ENCODE measurements at regions of chr10 and their contacts with region 1.

Region 1: DNA sequence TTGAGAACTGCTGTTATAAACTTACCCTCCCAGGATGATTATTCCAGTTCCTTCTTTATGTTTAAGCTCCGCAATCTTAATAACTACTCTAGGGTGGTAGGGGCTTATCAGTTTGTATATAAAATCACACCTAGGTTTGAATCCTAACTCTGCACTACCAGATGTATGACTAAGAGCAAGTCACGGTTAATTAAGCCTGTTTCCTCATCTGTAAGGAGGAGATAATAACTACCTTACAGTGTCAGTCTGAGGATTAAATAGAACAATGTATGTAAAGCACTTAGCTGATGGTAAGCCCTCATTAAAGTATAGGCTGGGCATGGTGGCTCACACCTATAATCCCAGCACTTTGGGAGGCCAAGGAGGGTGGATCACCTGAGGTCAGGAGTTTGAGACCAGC is 9.2 kb downstream of the DNA2 start:
- H3K4me3 ChIP-seq: no peak overlapping the region
- H3K27ac ChIP-seq: no peak overlapping the region
- H3K4me1 ChIP-seq: no peaks in the 10 kb centered on the region
- CTCF ChIP-seq: no peak

Region 2: DNA sequence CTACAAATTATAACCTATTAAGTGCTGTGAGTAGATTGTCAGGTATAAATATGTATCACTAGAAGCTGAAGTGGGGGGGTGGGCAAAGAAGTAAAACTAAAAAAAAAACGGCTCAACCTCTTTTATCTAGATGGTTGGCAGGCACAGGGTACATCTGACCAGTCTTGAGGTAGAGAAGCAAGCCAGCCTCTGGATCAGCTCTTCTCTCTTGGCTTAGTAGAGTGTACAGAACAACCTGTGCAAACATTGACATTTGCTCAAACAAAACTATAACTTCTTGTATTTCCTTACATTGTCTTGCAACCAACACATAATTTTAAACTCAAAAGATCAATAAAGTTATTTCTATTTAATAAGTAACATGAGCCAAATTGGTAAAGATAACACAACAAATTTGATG is 16.4 kb before region 1 on chr10:
- CTCF ChIA-PET with region 1: interaction called, 4 read pairs
- POLR2A ChIA-PET with region 1: interaction called, 10 read pairs
- H3K4me3 ChIP-seq: no peak overlapping the region
- H3K27ac ChIP-seq: no peak overlapping the region
- H3K4me1 ChIP-seq: no peaks in the 10 kb centered on the region
- CTCF ChIP-seq: no peak

Region 3: GRCh38 chr10:68506411-68506810 is 43.9 kb after region 1 on chr10:
- CTCF ChIA-PET with region 1: no interaction called
- POLR2A ChIA-PET with region 1: no interaction called
- H3K4me3 ChIP-seq: no peak overlapping the region
- H3K27ac ChIP-seq: no peak overlapping the region
- H3K4me1 ChIP-seq: no peaks in the 10 kb centered on the region
- CTCF ChIP-seq: no peak

Measured in HEK293 (cell line).